ENCODE measurements at regions of chr5 and their contacts with region 1.

Region 1: DNA sequence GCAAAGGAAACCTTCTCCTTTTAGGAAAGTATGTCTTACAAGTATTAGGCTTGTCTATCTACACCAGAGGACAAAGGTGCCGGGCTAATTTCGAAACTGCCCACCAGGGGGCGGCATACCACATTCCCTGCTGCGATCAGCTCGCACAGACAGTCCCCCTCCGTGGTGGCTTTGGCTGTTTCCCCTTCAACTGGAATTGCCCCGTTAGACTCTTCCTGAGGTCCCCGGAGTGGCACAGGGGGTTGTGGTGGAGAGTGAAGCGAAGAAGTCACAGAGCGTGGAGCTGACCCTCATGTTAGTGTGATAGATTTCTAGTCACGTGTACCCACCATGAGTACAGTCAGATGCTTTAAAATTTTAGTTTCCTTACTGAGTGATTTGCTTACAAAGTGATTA is 17.5 kb downstream of the PTTG1 start:
- DNase-seq: peak; percentile 79 to 90 (median 84)
- H3K4me3 ChIP-seq: peak overlapping the region; percentile 69
- H3K4me3 Mint-ChIP-seq: peak overlapping the region; percentile 85 to 98 (median 92)
- H3K27ac ChIP-seq: peak overlapping the region; percentile 49
- H3K27ac Mint-ChIP-seq: peak overlapping the region; percentile 65 to 97 (median 86)
- H3K4me1 ChIP-seq: no peaks in the 10 kb centered on the region
- H3K4me1 Mint-ChIP-seq: peaks cover 12 to 20% (median 14%) of the 10 kb centered on the region in 3 donors
- H3K27me3 ChIP-seq: no peaks in the 10 kb centered on the region
- H3K27me3 Mint-ChIP-seq: peaks cover 2 to 13% of the 10 kb centered on the region in 2 donors

Region 2: DNA sequence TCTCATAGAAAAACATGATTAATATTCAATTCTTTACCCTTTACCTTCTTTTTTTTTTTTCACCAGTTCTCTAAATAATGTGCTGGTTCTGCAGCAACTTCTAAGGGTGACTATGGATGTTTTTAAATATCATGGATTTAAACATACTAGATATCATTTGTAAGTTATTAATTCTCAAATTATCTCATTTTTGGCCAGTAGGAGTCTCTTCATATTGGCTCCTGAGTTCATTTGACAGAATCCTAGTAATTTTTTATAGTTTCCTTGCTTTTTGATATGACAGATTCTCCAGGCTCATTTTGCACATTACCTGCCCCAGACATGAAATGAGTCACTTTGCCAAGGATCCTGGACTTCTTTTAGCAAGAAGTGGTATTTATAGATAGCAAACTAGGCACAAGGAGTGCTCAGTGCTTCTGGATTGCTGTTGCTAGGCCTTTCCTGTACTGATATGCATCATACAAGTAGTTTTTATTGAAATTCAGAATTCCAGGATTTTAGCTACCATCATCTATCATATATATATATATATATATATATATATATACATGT is 907.6 kb before region 1 on chr5:
- CTCF ChIA-PET with region 1: no interaction called
- POLR2A ChIA-PET with region 1: no interaction called
- DNase-seq: no peak
- H3K4me3 ChIP-seq: no peak overlapping the region
- H3K4me3 Mint-ChIP-seq: no peak overlapping the region
- H3K27ac ChIP-seq: no peak overlapping the region
- H3K27ac Mint-ChIP-seq: no peak overlapping the region
- H3K4me1 ChIP-seq: no peaks in the 10 kb centered on the region
- H3K4me1 Mint-ChIP-seq: no peaks in the 10 kb centered on the region
- H3K27me3 ChIP-seq: no peaks in the 10 kb centered on the region
- H3K27me3 Mint-ChIP-seq: peaks cover 0 to 3% of the 10 kb centered on the region in 2 donors

Region 3: GRCh38 chr5:160418561-160419457 is 20.4 kb before region 1 on chr5 and contains the start of gene SLU7:
- CTCF ChIA-PET with region 1: interaction called, 155 read pairs
- POLR2A ChIA-PET with region 1: interaction called, 11 read pairs
- DNase-seq: peak; percentile 88 to 95 (median 90)
- H3K4me3 ChIP-seq: peak within 1 kb of the TSS; percentile 93
- H3K4me3 Mint-ChIP-seq: peak within 1 kb of the TSS; percentile 94 to 100 (median 98)
- H3K27ac ChIP-seq: peak within 1 kb of the TSS; percentile 91
- H3K27ac Mint-ChIP-seq: peak within 1 kb of the TSS; percentile 86 to 100 (median 98)
- H3K4me1 ChIP-seq: peaks cover 42% of the 10 kb centered on the region
- H3K4me1 Mint-ChIP-seq: peaks cover 73 to 89% (median 89%) of the 10 kb centered on the region in 3 donors
- H3K27me3 ChIP-seq: no peaks in the 10 kb centered on the region
- H3K27me3 Mint-ChIP-seq: peaks cover 0 to 4% of the 10 kb centered on the region in 2 donors
- total RNA-seq, gene SLU7: 48.3 to 55.7 TPM

Region 4: GRCh38 chr5:160458806-160459800 is 19.9 kb after region 1 on chr5:
- CTCF ChIA-PET with region 1: interaction called, 64 read pairs
- POLR2A ChIA-PET with region 1: no interaction called
- DNase-seq: no peak
- H3K4me3 ChIP-seq: no peak overlapping the region
- H3K4me3 Mint-ChIP-seq: no peak overlapping the region
- H3K27ac ChIP-seq: no peak overlapping the region
- H3K27ac Mint-ChIP-seq: no peak overlapping the region
- H3K4me1 ChIP-seq: no peaks in the 10 kb centered on the region
- H3K4me1 Mint-ChIP-seq: peaks cover 3 to 7% (median 6%) of the 10 kb centered on the region in 3 donors
- H3K27me3 ChIP-seq: no peaks in the 10 kb centered on the region
- H3K27me3 Mint-ChIP-seq: peaks cover 3 to 4% of the 10 kb centered on the region in 2 donors

Region 5: GRCh38 chr5:160477266-160477970 is 38.2 kb after region 1 on chr5:
- CTCF ChIA-PET with region 1: interaction called, 18 read pairs
- POLR2A ChIA-PET with region 1: no interaction called
- DNase-seq: no peak
- H3K4me3 ChIP-seq: no peak overlapping the region
- H3K4me3 Mint-ChIP-seq: peak overlapping the region; percentile 8 to 70 (median 57)
- H3K27ac ChIP-seq: no peak overlapping the region
- H3K27ac Mint-ChIP-seq: peak overlapping the region; percentile 47 to 93 (median 80)
- H3K4me1 ChIP-seq: peaks cover 18% of the 10 kb centered on the region
- H3K4me1 Mint-ChIP-seq: peaks cover 66 to 89% (median 89%) of the 10 kb centered on the region in 3 donors
- H3K27me3 ChIP-seq: no peaks in the 10 kb centered on the region
- H3K27me3 Mint-ChIP-seq: no peaks in the 10 kb centered on the region

Region 6: GRCh38 chr5:160500786-160501779 is 61.9 kb after region 1 on chr5:
- CTCF ChIA-PET with region 1: interaction called, 104 read pairs
- POLR2A ChIA-PET with region 1: no interaction called
- DNase-seq: no peak
- H3K4me3 ChIP-seq: no peak overlapping the region
- H3K4me3 Mint-ChIP-seq: no peak overlapping the region
- H3K27ac ChIP-seq: no peak overlapping the region
- H3K27ac Mint-ChIP-seq: peak overlapping the region in 1 of 8 donors; percentile 4
- H3K4me1 ChIP-seq: peaks cover 4% of the 10 kb centered on the region
- H3K4me1 Mint-ChIP-seq: peaks cover 6 to 18% (median 12%) of the 10 kb centered on the region in 3 donors
- H3K27me3 ChIP-seq: no peaks in the 10 kb centered on the region
- H3K27me3 Mint-ChIP-seq: peaks cover 0 to 3% of the 10 kb centered on the region in 2 donors

Region 7: GRCh38 chr5:160787240-160787639 is 348.0 kb after region 1 on chr5:
- CTCF ChIA-PET with region 1: interaction called, 14 read pairs
- POLR2A ChIA-PET with region 1: no interaction called
- DNase-seq: peak in 1 of 5 donors; percentile 46
- H3K4me3 ChIP-seq: no peak overlapping the region
- H3K4me3 Mint-ChIP-seq: no peak overlapping the region
- H3K27ac ChIP-seq: no peak overlapping the region
- H3K27ac Mint-ChIP-seq: peak overlapping the region in 1 of 8 donors; percentile 37
- H3K4me1 ChIP-seq: no peaks in the 10 kb centered on the region
- H3K4me1 Mint-ChIP-seq: no peaks in the 10 kb centered on the region
- H3K27me3 ChIP-seq: no peaks in the 10 kb centered on the region
- H3K27me3 Mint-ChIP-seq: peaks cover 3 to 8% of the 10 kb centered on the region in 2 donors